CD8-positive, alpha-beta T cell (primary cell): ENCODE measurements at regions of chr16 and their contacts with region 1.

Region 1: GRCh38 chr16:87464691-87465300 is 28.0 kb downstream of the ZCCHC14 start:
- DNase-seq: peak in 4 of 9 experiments; percentile 23 to 47 (median 32)
- ATAC-seq: peak; percentile 43
- H3K4me3 ChIP-seq: no peak overlapping the region
- H3K4me3 Mint-ChIP-seq: peak overlapping the region; percentile 68
- H3K27ac ChIP-seq: no peak overlapping the region
- H3K27ac Mint-ChIP-seq: peak overlapping the region; percentile 90
- H3K4me1 ChIP-seq: peaks cover 33% of the 10 kb centered on the region
- H3K4me1 Mint-ChIP-seq: peaks cover 38% of the 10 kb centered on the region
- H3K27me3 ChIP-seq: no peaks in the 10 kb centered on the region
- H3K27me3 Mint-ChIP-seq: no peaks in the 10 kb centered on the region
- CTCF ChIP-seq: no peak

Region 2: GRCh38 chr16:87487361-87488001 is 22.7 kb after region 1 on chr16:
- CTCF ChIA-PET with region 1: no interaction called
- POLR2A ChIA-PET with region 1: interaction called, 3 read pairs
- intact Hi-C with region 1: loop called (anchors 2 kb)
- DNase-seq: peak in 3 of 9 experiments; percentile 13 to 30 (median 21)
- ATAC-seq: no peak
- H3K4me3 ChIP-seq: no peak overlapping the region
- H3K4me3 Mint-ChIP-seq: no peak overlapping the region
- H3K27ac ChIP-seq: no peak overlapping the region
- H3K27ac Mint-ChIP-seq: no peak overlapping the region
- H3K4me1 ChIP-seq: peaks cover 58% of the 10 kb centered on the region
- H3K4me1 Mint-ChIP-seq: peaks cover 72% of the 10 kb centered on the region
- H3K27me3 ChIP-seq: no peaks in the 10 kb centered on the region
- H3K27me3 Mint-ChIP-seq: no peaks in the 10 kb centered on the region
- CTCF ChIP-seq: no peak